Activated CD8-positive, alpha-beta memory T cell treated with anti-CD3 and anti-CD28 coated beads, Interleukin-2, amount 10 ng/mL, durations not matched to agents 7 days and 5 days (primary cell): ENCODE measurements at regions of chr14 and their contacts with region 1.

Region 1: DNA sequence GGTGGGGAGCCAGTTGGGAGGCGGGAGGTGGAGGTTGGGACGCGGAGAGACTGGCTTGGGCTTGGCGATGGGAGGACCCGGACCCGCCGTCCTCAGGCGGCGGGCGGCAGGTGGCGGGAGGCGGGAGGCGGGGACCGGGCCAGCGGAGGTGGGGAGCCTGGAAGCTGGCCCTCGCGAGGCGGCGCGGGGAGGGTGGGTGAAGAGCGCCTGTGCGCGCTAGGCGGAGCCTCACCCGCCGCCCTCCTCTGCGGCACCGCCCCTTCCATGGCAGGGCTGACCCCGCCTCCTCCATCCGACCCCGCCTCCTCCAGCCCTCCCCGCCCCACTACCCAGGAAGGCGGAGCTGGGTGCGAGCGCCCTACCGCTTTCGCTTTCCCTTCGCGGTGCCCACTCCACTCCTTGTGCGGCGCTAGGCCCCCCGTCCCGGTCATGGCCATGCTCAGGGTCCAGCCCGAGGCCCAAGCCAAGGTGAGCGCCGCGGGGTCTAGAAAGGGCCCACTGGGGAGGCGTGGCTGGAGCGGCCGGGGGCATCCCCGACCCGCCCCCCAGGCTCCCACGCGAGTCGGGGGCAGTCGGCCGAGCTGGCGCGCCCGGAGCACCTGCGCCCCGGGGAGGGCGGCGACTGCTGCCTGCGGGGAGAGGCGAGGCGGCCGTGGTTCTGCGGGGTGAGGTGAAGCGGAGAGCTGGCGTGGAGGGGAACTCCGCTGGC is at the start of gene PSME1:
- DNase-seq: peak; percentile 96
- ATAC-seq: peak; percentile 94
- H3K4me3 Mint-ChIP-seq: peak within 1 kb of the TSS; percentile 91
- H3K27ac Mint-ChIP-seq: peak within 1 kb of the TSS; percentile 85
- H3K4me1 Mint-ChIP-seq: peaks cover 52% of the 10 kb centered on the region
- H3K27me3 Mint-ChIP-seq: no peaks in the 10 kb centered on the region
- total RNA-seq, gene PSME1: 420 to 454 TPM

Region 2: DNA sequence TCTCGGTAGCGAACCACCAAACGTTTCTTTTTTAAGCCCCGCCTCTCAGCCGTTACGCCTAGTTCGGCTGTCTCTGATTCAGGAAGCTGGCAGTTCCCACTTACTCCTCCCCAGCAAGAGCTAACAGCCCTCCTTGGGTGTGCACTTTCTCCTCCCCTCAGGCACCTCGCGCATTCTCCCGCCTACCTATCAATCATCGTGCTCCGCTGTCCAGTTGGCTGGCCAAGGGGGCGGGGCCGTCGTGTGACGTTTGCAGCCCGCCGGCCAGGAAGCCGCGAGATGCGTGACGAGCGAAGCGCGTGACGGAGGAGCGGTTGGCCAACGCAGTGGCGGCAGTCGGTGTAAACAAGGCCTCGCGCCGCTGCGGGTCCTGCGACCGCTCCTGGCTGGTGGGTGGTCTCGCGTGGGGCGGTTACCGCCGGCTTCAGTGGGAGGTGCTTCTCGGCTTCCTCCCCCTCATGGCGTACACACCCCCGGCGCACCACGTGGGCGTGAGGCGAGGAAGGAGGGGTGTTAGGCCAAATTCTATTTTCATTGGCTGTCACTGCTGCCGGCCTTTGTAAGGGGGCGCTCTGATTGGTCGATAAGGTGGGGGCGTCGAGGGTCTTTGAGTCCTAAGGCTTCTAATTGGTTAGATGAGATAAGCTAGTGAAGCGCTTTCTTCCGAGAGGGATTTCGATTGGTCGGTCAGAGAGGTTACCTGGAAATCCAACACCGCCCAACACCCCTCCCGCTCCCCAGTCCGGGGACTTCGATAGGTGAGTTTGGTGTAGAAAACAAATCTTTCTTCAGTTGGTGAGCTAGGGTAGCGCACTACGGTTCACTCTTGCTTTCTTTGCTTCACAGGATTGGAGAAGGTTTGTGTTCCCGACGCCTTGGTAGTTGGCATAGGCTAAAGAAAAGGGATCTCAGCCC is 21.2 kb before region 1 on chr14 and contains the starts of genes DCAF11 and NRL:
- CTCF ChIA-PET with region 1: interaction called, 52 read pairs
- DNase-seq: peak; percentile 100
- ATAC-seq: peak; percentile 91
- H3K4me3 Mint-ChIP-seq: peak within 1 kb of the TSS; percentile 99
- H3K27ac Mint-ChIP-seq: peak within 1 kb of the TSS; percentile 100
- H3K4me1 Mint-ChIP-seq: peaks cover 30% of the 10 kb centered on the region
- H3K27me3 Mint-ChIP-seq: no peaks in the 10 kb centered on the region
- total RNA-seq, gene DCAF11: 86.3 to 94.4 TPM
- total RNA-seq, gene NRL: 2.6 to 3.2 TPM

Region 3: GRCh38 chr14:24146978-24147760 is 11.2 kb after region 1 on chr14 and contains the start of gene RNF31:
- CTCF ChIA-PET with region 1: interaction called, 33 read pairs
- DNase-seq: peak; percentile 99
- ATAC-seq: peak; percentile 88
- H3K4me3 Mint-ChIP-seq: peak within 1 kb of the TSS; percentile 94
- H3K27ac Mint-ChIP-seq: peak within 1 kb of the TSS; percentile 99
- H3K4me1 Mint-ChIP-seq: peaks cover 67% of the 10 kb centered on the region
- H3K27me3 Mint-ChIP-seq: no peaks in the 10 kb centered on the region
- total RNA-seq, gene RNF31: 129 to 149 TPM